OCI-LY7 (cell line): ENCODE measurements at regions of chr13 and their contacts with region 1.

Region 1: DNA sequence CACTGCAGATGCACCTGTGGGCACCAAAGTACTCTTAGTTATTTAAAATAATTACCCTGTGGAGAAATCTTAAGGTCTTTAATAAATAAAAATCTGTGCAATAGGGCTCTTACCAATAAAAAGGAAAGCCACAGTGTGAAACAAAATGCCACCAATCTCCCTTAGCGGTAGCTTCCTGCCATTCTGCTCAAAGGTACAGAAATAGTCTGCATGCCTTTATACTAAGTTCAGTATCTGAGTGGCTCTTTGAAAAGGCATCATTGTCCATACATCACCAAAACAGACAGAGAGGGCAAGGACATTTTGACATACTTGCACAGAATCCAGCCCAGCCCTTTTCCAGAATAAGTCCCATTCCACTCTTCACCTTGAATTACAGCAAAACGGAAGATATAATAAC is 161.0 kb downstream of the KLF12 start:
- DNase-seq: peak; percentile 73
- H3K4me3 ChIP-seq: peak overlapping the region; percentile 68
- H3K27ac ChIP-seq: peak overlapping the region; percentile 99
- H3K4me1 ChIP-seq: peaks cover 96% of the 10 kb centered on the region
- CTCF ChIP-seq: no peak

Region 2: DNA sequence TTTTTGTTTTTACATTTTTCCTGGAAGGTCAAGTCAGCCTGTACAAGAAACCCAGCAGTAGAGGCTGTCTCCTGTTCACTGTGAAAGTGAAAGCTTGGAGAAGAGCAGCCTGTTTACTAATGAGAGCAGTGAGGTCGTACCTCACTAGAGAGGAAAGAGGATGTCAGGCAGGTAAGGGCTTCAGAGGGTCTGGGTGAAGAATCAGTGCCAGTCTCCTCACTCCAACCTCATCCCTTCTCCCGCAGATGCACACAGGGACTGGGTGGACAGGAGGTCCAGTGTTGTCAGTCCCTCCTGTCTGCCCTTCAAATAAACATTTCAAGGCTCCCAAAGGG is 451.9 kb before region 1 on chr13:
- CTCF ChIA-PET with region 1: no interaction called
- POLR2A ChIA-PET with region 1: no interaction called
- intact Hi-C with region 1: no loop called
- DNase-seq: no peak
- H3K4me3 ChIP-seq: no peak overlapping the region
- H3K27ac ChIP-seq: no peak overlapping the region
- H3K4me1 ChIP-seq: no peaks in the 10 kb centered on the region
- CTCF ChIP-seq: no peak

Region 3: GRCh38 chr13:73991884-73992283 is 18.7 kb after region 1 on chr13:
- CTCF ChIA-PET with region 1: interaction called, 7 read pairs
- POLR2A ChIA-PET with region 1: interaction called, 306 read pairs
- intact Hi-C with region 1: loop called (anchors 1 kb)
- DNase-seq: peak; percentile 84
- H3K4me3 ChIP-seq: peak overlapping the region; percentile 56
- H3K27ac ChIP-seq: peak overlapping the region; percentile 99
- H3K4me1 ChIP-seq: peaks cover 98% of the 10 kb centered on the region
- CTCF ChIP-seq: no peak